Cardiac septum (tissue), 1 donor: ENCODE measurements at regions of chr3 and their contacts with region 1.

Region 1: GRCh38 chr3:69324362-69325025 is 61.4 kb downstream of the FRMD4B start:
- DNase-seq: no peak

Region 2: DNA sequence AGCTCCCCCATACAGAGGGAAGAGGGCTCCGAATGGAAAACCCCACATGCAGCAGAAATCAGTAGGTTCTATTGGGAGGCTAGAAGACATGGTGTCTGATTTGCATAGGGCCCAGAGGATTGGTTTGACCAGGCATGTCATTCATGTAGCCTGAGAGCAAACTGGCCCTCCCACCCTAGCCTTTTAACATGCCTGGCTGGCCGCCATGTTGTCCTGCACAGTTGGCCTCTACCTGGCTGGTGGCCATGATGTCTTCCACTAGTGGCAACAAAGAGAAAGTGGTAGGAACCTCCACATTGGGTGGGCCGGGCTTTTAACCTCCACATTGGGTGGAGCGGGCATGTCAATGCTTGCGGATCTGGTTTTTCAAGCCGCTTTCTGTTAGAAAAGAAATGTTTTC is 704.3 kb before region 1 on chr3:
- intact Hi-C with region 1: no loop called
- DNase-seq: no peak

Region 3: DNA sequence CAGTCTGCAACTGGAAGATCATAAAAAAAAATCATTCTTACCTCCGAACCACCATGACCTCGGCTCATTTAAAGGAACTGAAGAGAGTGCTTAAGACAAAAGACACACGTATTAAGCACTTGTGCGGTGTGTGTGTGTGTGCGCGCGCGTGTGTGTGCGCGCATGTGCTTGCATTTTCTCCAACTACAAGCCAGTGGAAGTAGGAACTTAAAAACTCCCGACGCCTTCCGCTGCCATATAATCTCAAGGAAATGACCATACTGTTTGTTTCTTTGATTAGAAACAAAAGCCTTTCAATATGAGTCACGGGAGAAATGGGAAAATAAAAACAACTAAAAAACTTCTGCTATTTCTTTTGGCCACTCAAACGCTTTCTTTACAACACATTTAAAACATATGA is 29.0 kb after region 1 on chr3:
- intact Hi-C with region 1: loop called (anchors 5 kb)
- DNase-seq: no peak

Region 4: GRCh38 chr3:69410250-69410649 is 85.8 kb after region 1 on chr3:
- intact Hi-C with region 1: loop called (anchors 5 kb)
- DNase-seq: no peak

Region 5: DNA sequence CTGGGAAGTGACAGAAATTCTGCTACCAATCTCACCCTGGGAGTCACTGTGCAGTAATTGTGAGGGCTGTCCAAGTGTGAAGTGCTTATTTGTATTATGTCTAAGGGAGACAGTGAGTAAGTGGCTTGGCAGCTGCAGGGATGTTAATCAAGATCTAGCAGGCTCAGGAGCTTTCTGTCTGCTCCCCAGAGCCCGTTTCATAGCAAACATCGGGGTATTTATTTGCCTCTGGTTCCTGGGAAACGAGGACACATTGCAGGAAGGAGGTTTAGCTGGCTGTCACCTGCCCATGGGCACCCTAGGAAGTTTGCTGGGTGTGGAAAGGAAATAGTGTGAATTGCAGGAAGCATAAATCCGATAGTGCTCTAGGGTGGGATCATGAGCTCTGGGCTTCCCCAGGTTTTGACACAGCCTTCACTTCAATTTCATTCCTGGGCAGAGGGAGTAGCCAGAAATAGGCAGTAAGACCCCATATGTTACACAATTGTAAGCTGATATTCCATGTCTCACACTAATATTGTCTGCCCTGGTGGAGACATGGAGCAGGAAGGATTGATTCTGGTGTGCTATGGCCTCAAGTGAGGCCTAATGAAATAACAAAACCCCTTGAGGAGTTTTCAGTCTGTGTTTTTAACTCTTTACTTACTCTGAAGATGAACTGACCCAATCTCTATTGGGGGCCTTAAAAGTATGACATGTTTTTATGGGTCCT is 340.7 kb after region 1 on chr3:
- intact Hi-C with region 1: loop called (anchors 5 kb)
- DNase-seq: no peak